Activated CD4-positive, alpha-beta memory T cell treated with anti-CD3 and anti-CD28 coated beads for 36 hours (primary cell): ENCODE measurements at regions of chr2 and their contacts with region 1.

Region 1: DNA sequence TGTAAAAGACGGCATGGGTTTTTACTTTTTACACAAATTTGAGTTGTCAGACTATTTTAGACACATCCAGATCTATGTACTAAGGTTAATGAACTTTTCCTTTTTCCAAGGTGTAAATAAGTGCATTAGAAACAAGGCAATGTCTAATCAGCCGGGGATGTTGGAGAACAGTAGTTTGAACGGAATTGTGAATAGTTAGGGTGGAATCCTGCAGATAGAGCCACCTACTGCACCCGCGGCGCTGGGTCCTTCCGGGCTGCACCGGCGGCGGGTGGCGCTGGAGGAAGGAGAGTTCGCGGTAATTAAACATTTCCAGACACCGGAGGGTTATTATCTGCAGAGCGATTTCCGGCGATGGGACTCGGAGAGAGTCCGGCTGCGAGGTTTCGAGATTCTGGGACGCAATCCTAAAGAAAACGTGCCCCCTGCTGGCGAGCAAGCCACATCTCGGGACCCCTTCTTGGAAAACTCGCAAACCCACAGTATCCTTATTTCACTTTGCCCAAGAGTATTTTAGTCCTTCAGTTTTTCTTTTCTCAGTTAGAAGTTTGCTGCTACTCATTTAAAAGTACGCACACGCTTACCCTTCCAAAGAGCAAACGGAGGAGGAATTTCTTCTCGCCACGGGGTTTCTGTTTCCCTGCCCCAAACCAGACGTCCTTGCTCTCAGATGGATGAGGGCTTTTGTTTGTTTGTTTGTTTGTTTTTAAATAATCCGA is 4.5 kb upstream of the OSR1 start:
- DNase-seq: peak; percentile 70
- H3K4me3 Mint-ChIP-seq: peak overlapping the region; percentile 83
- H3K27ac Mint-ChIP-seq: no peak overlapping the region
- H3K4me1 Mint-ChIP-seq: peaks cover 24% of the 10 kb centered on the region
- H3K27me3 Mint-ChIP-seq: peaks cover 51% of the 10 kb centered on the region

Region 2: DNA sequence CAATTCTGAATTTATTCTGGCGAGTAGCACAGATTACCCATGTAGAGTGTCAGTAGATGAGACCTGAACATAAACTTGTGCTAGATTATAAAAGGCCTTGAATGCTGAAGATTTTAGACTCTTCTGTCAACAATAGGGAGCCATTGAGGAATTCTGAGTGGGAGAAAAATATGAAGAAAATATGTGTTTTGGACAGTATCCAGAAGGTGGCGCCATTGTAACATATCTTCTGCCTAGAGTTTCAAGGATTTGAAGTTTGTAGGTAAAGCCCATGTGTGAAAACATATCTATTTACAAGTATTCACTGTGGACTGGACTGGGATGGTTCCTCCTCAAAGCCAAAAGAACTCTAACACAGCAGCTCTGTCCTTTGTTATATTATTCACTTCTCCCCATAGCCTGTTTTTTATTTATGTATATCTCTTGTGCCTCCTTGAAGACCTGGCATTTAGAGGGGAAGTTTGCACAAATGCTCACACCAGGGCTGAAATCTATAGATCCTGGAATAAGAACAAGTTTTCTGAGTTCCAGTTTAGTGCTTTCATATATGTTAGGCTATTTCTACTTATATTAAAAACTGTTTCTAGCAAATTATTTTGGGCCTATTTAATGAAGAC is 927.4 kb before region 1 on chr2:
- CTCF ChIA-PET with region 1: no interaction called
- POLR2A ChIA-PET with region 1: no interaction called
- intact Hi-C with region 1: loop called (anchors 5 kb)
- DNase-seq: no peak
- H3K4me3 Mint-ChIP-seq: no peak overlapping the region
- H3K27ac Mint-ChIP-seq: no peak overlapping the region
- H3K4me1 Mint-ChIP-seq: no peaks in the 10 kb centered on the region
- H3K27me3 Mint-ChIP-seq: no peaks in the 10 kb centered on the region

Region 3: DNA sequence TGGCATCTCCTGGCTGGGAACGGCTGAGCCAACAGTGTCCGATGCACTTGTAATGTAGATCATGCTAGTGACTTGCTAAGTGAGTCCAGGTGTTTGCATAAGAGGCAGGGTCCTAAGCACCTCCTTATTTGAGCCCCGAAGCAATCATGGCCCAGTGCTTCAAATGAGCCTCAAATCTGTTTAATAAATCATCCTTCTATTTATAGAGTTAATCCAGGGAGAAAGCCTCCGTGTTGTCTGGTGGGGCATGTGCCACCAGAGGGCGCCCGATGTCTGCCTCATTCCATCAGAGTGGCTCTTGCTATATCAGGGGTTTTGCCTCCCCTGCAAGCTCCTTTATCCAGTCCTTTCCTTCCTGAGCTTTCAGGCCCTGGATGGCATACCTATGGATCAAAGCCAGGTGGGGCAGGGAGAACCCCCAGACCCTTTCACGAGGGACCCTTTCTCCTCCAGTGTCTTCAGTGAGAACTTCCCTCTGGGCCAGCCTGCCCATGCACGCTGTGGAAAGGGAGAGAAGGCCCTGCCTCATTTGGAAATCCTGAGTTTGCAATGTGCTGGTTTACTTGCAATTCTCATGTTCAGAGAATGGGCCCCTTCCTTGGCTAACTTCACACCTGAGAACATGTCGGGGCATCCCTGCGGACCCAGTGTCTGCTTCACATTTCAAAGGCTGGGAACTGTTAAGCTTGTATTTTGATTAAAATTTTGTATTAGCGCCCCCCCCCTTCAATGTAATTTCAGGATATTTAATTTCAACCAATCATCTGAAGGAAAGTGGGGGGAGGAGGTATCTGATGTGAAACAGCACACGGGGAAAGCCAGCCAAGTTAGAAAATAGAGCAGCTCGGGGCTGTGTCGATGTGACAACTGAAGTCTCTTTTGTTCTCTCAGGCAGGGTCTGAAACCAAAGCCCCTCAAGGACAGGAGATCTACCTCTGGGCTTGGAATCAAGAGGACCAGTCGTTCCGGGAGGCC is 842.2 kb before region 1 on chr2:
- CTCF ChIA-PET with region 1: no interaction called
- POLR2A ChIA-PET with region 1: no interaction called
- intact Hi-C with region 1: loop called (anchors 1 kb)
- DNase-seq: peak; percentile 77
- H3K4me3 Mint-ChIP-seq: no peak overlapping the region
- H3K27ac Mint-ChIP-seq: no peak overlapping the region
- H3K4me1 Mint-ChIP-seq: no peaks in the 10 kb centered on the region
- H3K27me3 Mint-ChIP-seq: peaks cover 21% of the 10 kb centered on the region

Region 4: DNA sequence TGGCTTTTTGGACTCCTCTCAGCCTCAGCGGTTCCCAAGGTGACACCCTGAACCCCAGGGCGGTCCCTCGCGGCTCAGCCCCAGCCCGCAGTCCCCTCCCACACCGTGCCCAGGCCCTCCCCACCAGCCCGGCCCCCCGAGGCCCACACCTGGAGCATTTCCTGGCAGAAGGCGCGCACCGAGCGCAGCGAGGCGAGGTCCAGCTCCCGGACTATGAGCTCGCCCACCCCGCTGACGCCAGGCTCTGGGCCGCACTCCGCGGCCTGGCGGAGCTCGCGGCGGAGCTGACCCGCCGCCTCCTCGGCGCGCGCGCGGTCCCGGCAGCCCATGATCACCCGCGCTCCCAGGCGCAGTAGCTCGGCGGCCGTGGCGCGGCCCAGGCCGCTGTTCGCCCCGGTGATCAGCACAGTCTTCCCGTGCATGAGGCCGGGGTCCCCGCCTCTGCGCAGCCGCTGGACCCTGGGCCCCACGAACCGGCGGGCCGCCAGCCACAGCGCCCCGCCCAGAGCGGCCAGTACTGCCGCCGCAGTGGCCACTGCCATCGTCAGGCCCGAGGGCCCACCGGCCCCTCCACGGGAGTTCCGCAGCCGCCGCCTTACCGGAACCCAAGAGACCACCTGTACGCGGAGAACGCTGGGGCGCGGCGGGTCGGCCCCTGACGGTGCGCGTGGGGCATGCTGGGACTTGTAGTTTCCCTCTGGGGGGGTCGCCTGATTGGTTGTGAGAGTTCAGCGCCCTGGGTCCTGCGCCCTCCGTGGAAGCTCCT is 802.7 kb before region 1 on chr2 and contains the start of gene RDH14:
- CTCF ChIA-PET with region 1: no interaction called
- POLR2A ChIA-PET with region 1: no interaction called
- intact Hi-C with region 1: loop called (anchors 5 kb)
- DNase-seq: peak; percentile 94
- H3K4me3 Mint-ChIP-seq: peak within 1 kb of the TSS; percentile 90
- H3K27ac Mint-ChIP-seq: peak within 1 kb of the TSS; percentile 89
- H3K4me1 Mint-ChIP-seq: peaks cover 33% of the 10 kb centered on the region
- H3K27me3 Mint-ChIP-seq: no peaks in the 10 kb centered on the region
- total RNA-seq, gene RDH14: 14.1 to 14.4 TPM

Region 5: DNA sequence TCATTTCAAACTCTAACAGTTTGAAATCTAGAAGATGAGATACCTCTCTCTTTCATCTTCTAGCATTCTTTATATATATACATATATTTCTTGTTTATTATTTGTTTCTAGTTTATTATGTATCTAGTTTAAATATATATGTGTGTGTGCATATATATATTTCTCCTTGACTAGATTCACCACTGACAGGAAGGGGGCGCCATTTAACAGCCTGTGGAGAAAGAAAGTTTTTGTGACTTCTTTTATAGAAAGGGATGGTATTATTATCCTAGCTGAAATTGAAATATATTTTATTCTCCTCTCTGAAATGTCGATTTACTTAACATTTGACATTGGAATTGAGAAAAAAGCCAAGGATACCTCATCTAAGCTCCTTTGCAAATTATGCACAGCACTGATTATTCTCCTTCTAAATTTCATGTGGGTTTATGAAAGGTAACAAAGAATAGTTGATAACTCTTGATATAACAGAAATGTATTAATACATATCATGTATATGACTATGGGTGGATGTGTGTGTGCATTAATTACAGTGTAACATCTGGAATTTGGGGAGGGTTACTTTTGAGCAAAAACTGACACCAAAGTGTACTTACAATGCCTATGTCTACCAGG is 612.9 kb before region 1 on chr2:
- CTCF ChIA-PET with region 1: interaction called, 5 read pairs
- POLR2A ChIA-PET with region 1: no interaction called
- intact Hi-C with region 1: loop called (anchors 2 kb)
- DNase-seq: peak; percentile 44
- H3K4me3 Mint-ChIP-seq: no peak overlapping the region
- H3K27ac Mint-ChIP-seq: no peak overlapping the region
- H3K4me1 Mint-ChIP-seq: no peaks in the 10 kb centered on the region
- H3K27me3 Mint-ChIP-seq: no peaks in the 10 kb centered on the region

Region 6: GRCh38 chr2:19272039-19272438 is 90.9 kb before region 1 on chr2:
- CTCF ChIA-PET with region 1: no interaction called
- POLR2A ChIA-PET with region 1: no interaction called
- intact Hi-C with region 1: no loop called
- DNase-seq: no peak
- H3K4me3 Mint-ChIP-seq: no peak overlapping the region
- H3K27ac Mint-ChIP-seq: no peak overlapping the region
- H3K4me1 Mint-ChIP-seq: no peaks in the 10 kb centered on the region
- H3K27me3 Mint-ChIP-seq: no peaks in the 10 kb centered on the region

Region 7: GRCh38 chr2:19651466-19651865 is 288.6 kb after region 1 on chr2:
- CTCF ChIA-PET with region 1: no interaction called
- POLR2A ChIA-PET with region 1: no interaction called
- intact Hi-C with region 1: no loop called
- DNase-seq: no peak
- H3K4me3 Mint-ChIP-seq: no peak overlapping the region
- H3K27ac Mint-ChIP-seq: no peak overlapping the region
- H3K4me1 Mint-ChIP-seq: no peaks in the 10 kb centered on the region
- H3K27me3 Mint-ChIP-seq: no peaks in the 10 kb centered on the region